ENCODE measurements at regions of chr16 and their contacts with region 1.

Region 1: DNA sequence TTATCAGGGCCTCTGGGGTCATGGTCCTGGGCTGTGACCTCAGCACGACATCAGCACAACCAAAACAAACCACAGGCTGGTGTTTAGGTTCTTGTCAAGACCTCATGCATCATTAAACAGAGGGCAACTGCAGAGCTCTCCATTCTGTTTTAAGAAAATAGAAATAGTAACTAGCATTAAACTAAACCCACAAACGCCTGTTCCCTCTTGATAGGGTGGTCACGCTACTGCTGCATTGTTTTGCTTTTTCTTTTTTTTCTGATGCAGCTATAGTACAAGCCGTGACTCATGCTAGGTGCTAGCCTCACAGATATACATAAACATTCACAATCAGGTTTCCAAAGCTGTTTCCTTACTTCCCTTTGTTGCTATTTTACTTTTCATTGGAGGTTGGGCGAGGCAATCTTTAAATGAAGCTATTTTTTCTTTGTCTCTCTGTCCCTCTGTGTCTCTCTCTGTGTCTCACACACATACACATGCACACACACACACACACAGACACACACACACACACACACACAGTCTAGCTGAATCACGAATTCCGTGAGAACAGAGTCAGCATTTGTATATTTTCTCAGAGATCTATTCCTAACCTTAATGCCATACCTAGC is 310.3 kb downstream of the CDH13 start:
- DNase-seq: peak; percentile 98
- H3K4me3 ChIP-seq: no peak overlapping the region
- H3K27ac ChIP-seq: peak overlapping the region; percentile 90
- H3K4me1 ChIP-seq: peaks cover 27% of the 10 kb centered on the region
- H3K27me3 ChIP-seq: no peaks in the 10 kb centered on the region
- CTCF ChIP-seq: no peak
- POLR2A ChIP-seq: peak; percentile 59

Region 2: DNA sequence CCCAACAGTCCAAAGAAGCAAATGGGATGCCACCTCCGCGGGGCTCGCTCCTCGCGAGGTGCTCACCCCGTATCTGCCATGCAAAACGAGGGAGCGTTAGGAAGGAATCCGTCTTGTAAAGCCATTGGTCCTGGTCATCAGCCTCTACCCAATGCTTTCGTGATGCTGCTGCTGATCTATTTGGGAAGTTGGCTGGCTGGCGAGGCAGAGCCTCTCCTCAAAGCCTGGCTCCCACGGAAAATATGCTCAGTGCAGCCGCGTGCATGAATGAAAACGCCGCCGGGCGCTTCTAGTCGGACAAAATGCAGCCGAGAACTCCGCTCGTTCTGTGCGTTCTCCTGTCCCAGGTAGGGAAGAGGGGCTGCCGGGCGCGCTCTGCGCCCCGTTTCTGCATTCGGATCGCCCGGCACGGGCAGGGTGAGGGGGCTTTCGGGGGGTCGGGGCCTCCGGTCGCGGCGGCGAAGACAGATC is 310.2 kb before region 1 on chr16 and contains the start of gene CDH13:
- CTCF ChIA-PET with region 1: interaction called, 6 read pairs
- POLR2A ChIA-PET with region 1: no interaction called
- dilution Hi-C with region 1: no loop called
- intact Hi-C with region 1: loop called (anchors 2 kb)
- DNase-seq: peak; percentile 62
- H3K4me3 ChIP-seq: peak within 1 kb of the TSS; percentile 52 to 82 (median 66)
- H3K27ac ChIP-seq: peak within 1 kb of the TSS; percentile 96
- H3K4me1 ChIP-seq: peaks cover 46% of the 10 kb centered on the region
- H3K27me3 ChIP-seq: peaks cover 0 to 2% of the 10 kb centered on the region in 2 experiments
- CTCF ChIP-seq: no peak
- POLR2A ChIP-seq: no peak
- total RNA-seq, gene CDH13: 98.5 and 124 TPM in 2 replicates

Region 3: DNA sequence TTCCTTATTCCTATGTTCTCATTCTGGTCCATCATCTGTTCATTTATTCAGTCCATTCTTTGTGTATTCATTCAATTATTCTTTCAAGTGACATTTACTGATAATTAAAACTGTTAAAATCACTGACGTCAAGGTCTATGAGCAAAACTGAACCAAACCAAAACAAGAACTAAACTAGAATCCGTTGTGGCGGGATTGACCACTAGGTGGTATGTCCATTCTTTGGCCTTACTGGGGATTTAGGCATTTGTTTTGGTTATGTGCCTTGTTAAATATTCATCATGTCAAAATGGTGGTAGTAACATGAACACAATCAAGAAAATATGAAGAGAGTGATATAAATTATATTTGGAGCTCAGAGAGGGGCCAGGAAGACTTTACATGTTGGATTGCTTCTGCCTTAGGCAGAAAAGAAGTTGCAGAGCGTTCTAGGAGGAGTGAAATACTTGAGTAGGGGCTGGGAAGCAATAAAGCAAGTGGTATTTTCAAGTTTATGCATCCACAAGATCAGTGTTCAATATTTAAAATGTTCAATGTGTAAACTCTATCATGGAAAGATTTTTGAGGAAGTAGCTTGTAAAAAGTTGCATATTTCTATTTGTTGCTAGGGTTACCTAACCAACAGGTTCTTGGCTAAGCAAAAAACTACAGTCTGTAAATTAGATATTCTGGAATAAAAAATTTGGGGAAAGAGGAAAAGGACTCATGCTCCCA is 181.3 kb before region 1 on chr16:
- CTCF ChIA-PET with region 1: interaction called, 8 read pairs
- POLR2A ChIA-PET with region 1: interaction called, 3 read pairs
- dilution Hi-C with region 1: no loop called
- intact Hi-C with region 1: loop called (anchors 1 kb)
- DNase-seq: no peak
- H3K4me3 ChIP-seq: no peak overlapping the region
- H3K27ac ChIP-seq: peak overlapping the region; percentile 92
- H3K4me1 ChIP-seq: peaks cover 59% of the 10 kb centered on the region
- H3K27me3 ChIP-seq: no peaks in the 10 kb centered on the region
- CTCF ChIP-seq: peak in 1 of 2 donors; percentile 7
- POLR2A ChIP-seq: no peak

Region 4: DNA sequence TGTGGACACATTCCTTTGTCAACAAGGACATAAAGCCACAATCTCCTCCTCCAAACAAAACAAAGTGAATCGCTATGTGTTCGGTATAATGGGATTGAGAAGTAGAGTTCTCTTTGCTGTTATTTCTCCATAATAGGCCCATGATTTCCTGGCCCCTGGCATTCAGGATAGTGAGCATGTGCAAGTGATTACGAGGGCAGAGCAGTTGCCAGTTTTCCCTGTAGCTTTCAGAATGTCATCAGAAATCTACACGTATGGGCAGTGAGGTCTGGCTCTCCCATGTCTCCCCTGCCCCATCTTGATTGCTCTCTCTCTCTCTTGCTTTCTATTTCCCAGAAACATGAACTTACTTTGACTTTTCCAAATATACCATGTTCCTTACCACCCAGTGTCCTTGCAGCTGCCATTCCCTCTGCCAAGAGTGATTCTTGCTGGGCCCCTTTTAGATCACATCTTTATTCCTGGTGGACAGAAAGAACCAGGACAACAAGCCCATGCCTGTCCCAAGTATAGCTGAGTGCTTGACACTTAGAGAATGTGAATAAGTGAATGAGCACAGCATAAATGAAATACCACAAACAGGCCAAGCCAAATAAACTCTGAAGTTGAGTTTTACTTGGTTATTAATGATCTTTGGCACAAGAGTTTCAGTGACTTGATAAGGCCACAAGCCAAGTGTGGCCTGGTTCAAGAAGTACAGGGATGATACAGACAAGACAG is 37.2 kb before region 1 on chr16:
- CTCF ChIA-PET with region 1: no interaction called
- POLR2A ChIA-PET with region 1: no interaction called
- dilution Hi-C with region 1: no loop called
- intact Hi-C with region 1: loop called (anchors 2 kb)
- DNase-seq: no peak
- H3K4me3 ChIP-seq: no peak overlapping the region
- H3K27ac ChIP-seq: no peak overlapping the region
- H3K4me1 ChIP-seq: peaks cover 11% of the 10 kb centered on the region
- H3K27me3 ChIP-seq: no peaks in the 10 kb centered on the region
- CTCF ChIP-seq: no peak
- POLR2A ChIP-seq: no peak

Region 5: DNA sequence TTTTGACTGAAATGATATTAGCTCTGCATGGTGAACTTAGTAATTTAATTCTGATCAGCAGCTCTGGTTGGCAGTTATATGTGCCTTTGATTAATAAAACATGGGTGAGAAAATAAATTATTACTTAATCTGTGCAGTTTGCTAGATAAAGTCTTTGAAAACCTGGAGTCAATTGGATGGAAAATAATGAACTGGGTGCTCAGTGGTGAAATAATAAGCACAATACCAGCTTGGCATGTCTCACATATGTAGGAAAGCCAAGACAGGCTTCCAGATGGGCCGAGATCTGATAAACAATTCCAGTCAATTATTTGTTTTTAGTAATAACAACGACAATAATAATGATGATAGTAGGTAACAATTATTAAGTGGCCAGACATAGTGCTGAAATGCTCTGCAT is 16.5 kb after region 1 on chr16:
- CTCF ChIA-PET with region 1: no interaction called
- POLR2A ChIA-PET with region 1: no interaction called
- dilution Hi-C with region 1: no loop called
- intact Hi-C with region 1: no loop called
- DNase-seq: no peak
- H3K4me3 ChIP-seq: no peak overlapping the region
- H3K27ac ChIP-seq: no peak overlapping the region
- H3K4me1 ChIP-seq: no peaks in the 10 kb centered on the region
- H3K27me3 ChIP-seq: no peaks in the 10 kb centered on the region
- CTCF ChIP-seq: no peak
- POLR2A ChIP-seq: no peak

Region 6: DNA sequence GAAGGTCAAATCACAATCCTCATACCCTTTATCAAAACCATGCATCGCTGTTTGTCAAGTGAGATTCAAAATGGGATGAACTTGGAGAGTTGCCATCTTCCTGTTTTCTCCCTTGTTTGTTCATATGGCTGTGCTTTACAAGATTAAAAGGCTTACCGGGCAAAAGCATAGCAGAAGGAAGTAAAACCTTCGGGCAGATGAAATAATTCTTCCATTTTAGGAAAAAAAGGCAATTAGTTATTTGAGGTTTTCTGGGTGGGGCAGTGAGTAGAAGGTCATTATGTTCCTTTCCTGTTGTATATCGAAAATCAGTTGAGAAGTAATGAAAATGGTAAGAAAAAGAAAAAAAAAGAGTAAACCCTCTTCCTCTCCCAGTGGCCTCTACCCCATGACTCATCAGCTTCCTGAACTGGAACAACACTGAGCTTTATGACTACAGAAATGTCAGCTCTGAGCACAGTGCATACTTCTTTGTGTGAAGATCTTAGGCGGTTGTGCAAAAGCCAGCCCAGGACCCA is 58.9 kb after region 1 on chr16:
- CTCF ChIA-PET with region 1: interaction called, 11 read pairs
- POLR2A ChIA-PET with region 1: no interaction called
- dilution Hi-C with region 1: no loop called
- intact Hi-C with region 1: loop called (anchors 1 kb)
- DNase-seq: peak; percentile 96
- H3K4me3 ChIP-seq: peak overlapping the region in 1 of 3 experiments; percentile 31
- H3K27ac ChIP-seq: peak overlapping the region; percentile 91
- H3K4me1 ChIP-seq: peaks cover 23% of the 10 kb centered on the region
- H3K27me3 ChIP-seq: no peaks in the 10 kb centered on the region
- CTCF ChIP-seq: no peak
- POLR2A ChIP-seq: no peak

Region 7: DNA sequence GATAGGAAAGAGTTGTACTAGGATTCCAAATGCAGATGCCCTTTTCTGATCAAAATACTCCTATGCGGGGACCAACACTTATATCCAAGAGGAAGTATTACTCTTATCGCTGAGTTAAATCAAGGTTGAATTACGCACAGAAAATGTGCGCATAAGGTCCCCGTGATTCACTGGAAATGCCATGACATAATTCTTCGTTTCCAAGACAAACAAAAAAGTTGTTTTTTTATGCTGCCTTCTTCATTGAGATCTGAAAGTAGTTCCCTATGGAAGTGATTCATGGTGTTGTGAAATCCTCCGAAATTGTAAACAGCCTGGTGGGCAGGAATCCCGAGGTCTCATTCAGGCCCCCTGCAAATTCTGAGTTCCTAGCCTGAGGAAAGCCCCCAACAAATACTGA is 407.0 kb after region 1 on chr16:
- CTCF ChIA-PET with region 1: no interaction called
- POLR2A ChIA-PET with region 1: no interaction called
- dilution Hi-C with region 1: no loop called
- intact Hi-C with region 1: loop called (anchors 1 kb)
- DNase-seq: peak; percentile 98
- H3K4me3 ChIP-seq: peak overlapping the region in 1 of 3 experiments; percentile 4
- H3K27ac ChIP-seq: peak overlapping the region; percentile 97
- H3K4me1 ChIP-seq: peaks cover 28% of the 10 kb centered on the region
- H3K27me3 ChIP-seq: no peaks in the 10 kb centered on the region
- CTCF ChIP-seq: no peak
- POLR2A ChIP-seq: peak; percentile 37